WTC11 (cell line): ENCODE measurements at regions of chr4 and their contacts with region 1.

Region 1: GRCh38 chr4:74038161-74039064 is at the start of gene CXCL3:
- DNase-seq: peak; percentile 86
- ATAC-seq: peak; percentile 86
- H3K4me3 Mint-ChIP-seq: peak within 1 kb of the TSS; percentile 89
- H3K27ac Mint-ChIP-seq: peak within 1 kb of the TSS; percentile 75
- H3K4me1 Mint-ChIP-seq: peaks cover 39% of the 10 kb centered on the region
- H3K27me3 Mint-ChIP-seq: peaks cover 4% of the 10 kb centered on the region; the same call in 1 of the 2 replicates
- CTCF ChIP-seq: no peak
- total RNA-seq, gene CXCL3: 3.5 to 7.7 TPM (median 7.0 TPM) in 3 replicates

Region 2: DNA sequence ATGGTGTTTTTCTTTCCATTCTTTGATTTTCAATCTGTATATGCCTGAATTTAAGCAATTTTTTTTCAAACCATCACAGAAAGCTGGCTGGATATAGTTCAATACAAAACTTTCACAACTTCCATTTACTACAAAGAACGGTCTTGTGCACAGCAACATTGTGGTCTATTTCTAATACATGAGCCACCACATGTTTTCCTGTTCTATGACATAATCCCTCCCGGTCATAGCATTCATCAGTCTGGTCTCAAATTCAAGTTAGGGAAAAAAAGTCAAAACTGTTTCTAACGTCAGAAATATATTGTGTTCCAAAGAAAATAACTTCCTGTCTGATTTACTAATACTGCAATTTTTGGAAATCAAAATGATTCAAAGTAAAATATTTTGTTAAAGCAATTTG is 209.5 kb before region 1 on chr4:
- CTCF ChIA-PET with region 1: no interaction called
- POLR2A ChIA-PET with region 1: no interaction called
- DNase-seq: no peak
- ATAC-seq: no peak
- H3K4me3 Mint-ChIP-seq: no peak overlapping the region
- H3K27ac Mint-ChIP-seq: no peak overlapping the region
- H3K4me1 Mint-ChIP-seq: no peaks in the 10 kb centered on the region
- H3K27me3 Mint-ChIP-seq: peaks cover 6% of the 10 kb centered on the region
- CTCF ChIP-seq: no peak

Region 3: GRCh38 chr4:74098450-74098994 is 60.1 kb after region 1 on chr4:
- CTCF ChIA-PET with region 1: interaction called, 11 read pairs
- POLR2A ChIA-PET with region 1: interaction called, 4 read pairs
- DNase-seq: peak; percentile 22
- ATAC-seq: peak; percentile 29; the same call in 1 of the 2 replicates
- H3K4me3 Mint-ChIP-seq: peak overlapping the region; percentile 78
- H3K27ac Mint-ChIP-seq: no peak overlapping the region
- H3K4me1 Mint-ChIP-seq: peaks cover 9% of the 10 kb centered on the region
- H3K27me3 Mint-ChIP-seq: peaks cover 36% of the 10 kb centered on the region
- CTCF ChIP-seq: no peak